ENCODE measurements at regions of chr1 and their contacts with region 1.

Region 1: GRCh38 chr1:40153073-40153770 is 8.0 kb upstream of the RLF start:
- DNase-seq: peak; percentile 59
- ATAC-seq: peak; percentile 85
- H3K4me3 ChIP-seq: peak overlapping the region; percentile 56; the same call in 1 of the 2 replicates
- H3K27ac ChIP-seq: peak overlapping the region; percentile 80
- H3K4me1 ChIP-seq: peaks cover 13% of the 10 kb centered on the region
- H3K27me3 ChIP-seq: no peaks in the 10 kb centered on the region
- CTCF ChIP-seq: peak; percentile 53 to 76 (median 71); a peak in 5 of 6 replicates
- EP300 ChIP-seq: no peak
- POLR2A ChIP-seq: no peak
- RAD21 ChIP-seq: peak; percentile 81

Region 2: DNA sequence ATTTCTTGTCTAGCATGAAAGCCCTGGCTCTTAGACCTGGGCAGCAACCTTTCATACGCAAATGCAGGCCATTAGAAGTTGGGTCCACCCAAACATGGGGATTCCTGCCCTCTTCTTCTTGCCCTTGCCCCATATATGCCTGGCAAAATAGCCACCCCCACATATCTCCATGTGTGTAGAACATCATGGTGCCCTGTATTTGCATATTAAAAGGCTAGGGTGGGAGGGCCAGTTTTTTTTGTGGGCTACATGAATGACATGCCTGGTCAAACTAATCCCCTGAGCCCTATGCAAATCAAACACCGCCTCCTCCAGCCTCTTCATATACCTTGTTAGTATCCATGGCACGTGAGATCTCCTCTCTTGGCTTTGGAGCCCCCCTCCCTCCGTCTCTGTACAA is 173.6 kb before region 1 on chr1:
- CTCF ChIA-PET with region 1: no interaction called
- POLR2A ChIA-PET with region 1: no interaction called
- RAD21 ChIA-PET with region 1: no interaction called
- SMC1A ChIA-PET with region 1: no interaction called
- in situ Hi-C with region 1: no loop called
- intact Hi-C with region 1: no loop called
- DNase-seq: no peak
- ATAC-seq: no peak
- H3K4me3 ChIP-seq: no peak overlapping the region
- H3K27ac ChIP-seq: no peak overlapping the region
- H3K4me1 ChIP-seq: peaks cover 3% of the 10 kb centered on the region
- H3K27me3 ChIP-seq: no peaks in the 10 kb centered on the region
- CTCF ChIP-seq: no peak
- EP300 ChIP-seq: no peak
- POLR2A ChIP-seq: no peak
- RAD21 ChIP-seq: no peak

Region 3: GRCh38 chr1:40078512-40079333 is 74.5 kb before region 1 on chr1:
- CTCF ChIA-PET with region 1: interaction called, 21 read pairs
- POLR2A ChIA-PET with region 1: interaction called, 5 read pairs
- RAD21 ChIA-PET with region 1: no interaction called
- SMC1A ChIA-PET with region 1: interaction called, 7 read pairs
- in situ Hi-C with region 1: no loop called
- intact Hi-C with region 1: no loop called
- DNase-seq: no peak
- ATAC-seq: peak; percentile 98
- H3K4me3 ChIP-seq: no peak overlapping the region
- H3K27ac ChIP-seq: no peak overlapping the region
- H3K4me1 ChIP-seq: no peaks in the 10 kb centered on the region
- H3K27me3 ChIP-seq: no peaks in the 10 kb centered on the region
- CTCF ChIP-seq: peak; percentile 74 to 85 (median 75)
- EP300 ChIP-seq: no peak
- POLR2A ChIP-seq: no peak
- RAD21 ChIP-seq: peak; percentile 63

Region 4: GRCh38 chr1:40185951-40186864 is 33.0 kb after region 1 on chr1:
- CTCF ChIA-PET with region 1: interaction called, 90 read pairs
- POLR2A ChIA-PET with region 1: interaction called, 7 read pairs
- RAD21 ChIA-PET with region 1: interaction called, 25 read pairs
- SMC1A ChIA-PET with region 1: interaction called, 62 read pairs
- in situ Hi-C with region 1: no loop called
- intact Hi-C with region 1: no loop called
- DNase-seq: peak; percentile 82
- ATAC-seq: peak; percentile 99
- H3K4me3 ChIP-seq: peak overlapping the region; percentile 60
- H3K27ac ChIP-seq: peak overlapping the region; percentile 71
- H3K4me1 ChIP-seq: peaks cover 32% of the 10 kb centered on the region
- H3K27me3 ChIP-seq: no peaks in the 10 kb centered on the region
- CTCF ChIP-seq: no peak
- EP300 ChIP-seq: peak; percentile 94
- POLR2A ChIP-seq: peak; percentile 57
- RAD21 ChIP-seq: no peak

Region 5: GRCh38 chr1:40232444-40232843 is 79.2 kb after region 1 on chr1:
- CTCF ChIA-PET with region 1: interaction called, 33 read pairs
- POLR2A ChIA-PET with region 1: interaction called, 5 read pairs
- RAD21 ChIA-PET with region 1: interaction called, 16 read pairs
- SMC1A ChIA-PET with region 1: interaction called, 31 read pairs
- in situ Hi-C with region 1: no loop called
- intact Hi-C with region 1: no loop called
- DNase-seq: peak; percentile 94
- ATAC-seq: peak; percentile 99
- H3K4me3 ChIP-seq: no peak overlapping the region
- H3K27ac ChIP-seq: peak overlapping the region; percentile 36
- H3K4me1 ChIP-seq: peaks cover 32% of the 10 kb centered on the region
- H3K27me3 ChIP-seq: no peaks in the 10 kb centered on the region
- CTCF ChIP-seq: no peak
- EP300 ChIP-seq: peak in 1 of 2 experiments; percentile 34; a peak in 1 of 4 replicates
- POLR2A ChIP-seq: no peak
- RAD21 ChIP-seq: no peak

Region 6: DNA sequence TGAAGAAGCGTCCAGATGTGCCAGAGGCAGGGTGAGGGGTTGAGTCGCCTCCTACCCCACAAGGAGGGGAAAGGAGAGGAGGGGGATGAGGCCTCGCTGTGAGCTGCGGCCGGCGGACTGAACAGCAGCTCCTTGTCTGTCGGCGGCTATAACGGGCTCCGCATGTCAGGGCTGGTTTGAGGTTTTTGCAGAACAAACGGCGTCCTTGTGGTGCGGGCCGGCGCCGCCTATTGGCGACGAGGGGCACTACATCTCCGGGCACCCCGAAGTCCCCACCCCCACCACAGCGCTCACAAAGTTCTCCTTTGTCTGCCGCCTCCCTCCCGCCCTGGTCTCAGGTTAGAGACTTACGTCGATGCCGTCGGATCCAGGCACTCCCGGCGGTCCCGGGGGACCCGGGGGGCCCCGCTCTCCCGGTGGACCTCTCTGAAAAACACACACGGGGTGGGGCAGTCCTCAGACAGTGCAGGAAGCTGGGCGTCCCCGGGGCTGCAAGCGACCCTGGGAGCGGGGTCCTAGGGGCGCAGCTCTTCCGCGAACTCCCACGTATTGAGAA is 162.1 kb after region 1 on chr1:
- CTCF ChIA-PET with region 1: interaction called, 125 read pairs
- POLR2A ChIA-PET with region 1: interaction called, 20 read pairs
- RAD21 ChIA-PET with region 1: interaction called, 81 read pairs
- SMC1A ChIA-PET with region 1: interaction called, 84 read pairs
- in situ Hi-C with region 1: no loop called
- intact Hi-C with region 1: loop called (anchors 2 kb)
- DNase-seq: peak; percentile 53
- ATAC-seq: peak; percentile 72
- H3K4me3 ChIP-seq: peak overlapping the region; percentile 70
- H3K27ac ChIP-seq: peak overlapping the region; percentile 59
- H3K4me1 ChIP-seq: peaks cover 41% of the 10 kb centered on the region
- H3K27me3 ChIP-seq: peaks cover 4 to 9% of the 10 kb centered on the region in 2 experiments; a peak in 3 of 4 replicates
- CTCF ChIP-seq: peak; percentile 96 to 98 (median 98)
- EP300 ChIP-seq: peak in 1 of 2 experiments; percentile 24; a peak in 1 of 4 replicates
- POLR2A ChIP-seq: peak; percentile 87
- RAD21 ChIP-seq: peak; percentile 69

Region 7: DNA sequence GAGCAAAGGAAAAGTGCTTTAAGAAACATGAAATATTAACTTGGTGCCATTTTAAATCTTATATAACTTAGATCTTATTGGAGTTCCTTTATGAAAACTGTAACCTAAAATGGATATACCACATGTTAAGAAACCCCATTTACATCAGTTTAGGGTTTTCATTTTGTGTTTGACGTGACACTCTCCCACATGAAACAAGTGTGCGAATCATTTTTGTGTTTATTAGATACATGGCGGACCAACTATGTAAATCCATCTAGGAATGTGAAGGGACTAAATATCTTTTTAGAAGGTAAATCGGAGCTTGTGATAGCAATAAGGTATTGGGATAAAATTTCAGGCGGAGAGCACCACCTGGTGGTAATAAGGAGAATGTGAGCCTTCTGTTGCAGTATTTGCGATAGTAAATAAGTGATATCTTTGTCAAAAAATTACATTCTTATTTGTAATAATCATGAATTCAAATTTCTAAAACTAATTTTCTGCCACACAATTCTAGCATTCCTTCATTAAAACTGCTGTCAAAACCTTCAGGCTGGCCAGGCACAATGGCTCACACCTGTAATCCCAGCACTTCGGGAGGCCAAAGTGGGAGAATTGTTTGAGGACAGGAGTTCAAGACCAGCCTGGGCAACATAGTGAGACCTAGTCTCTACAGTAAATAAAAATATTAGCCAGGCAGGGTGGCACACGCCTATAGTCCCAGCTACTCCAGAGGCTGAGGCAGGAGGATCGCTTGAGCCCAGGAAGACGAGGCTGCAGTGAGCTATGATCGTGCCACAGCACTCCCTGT is 251.6 kb after region 1 on chr1:
- CTCF ChIA-PET with region 1: interaction called, 48 read pairs
- POLR2A ChIA-PET with region 1: interaction called, 4 read pairs
- RAD21 ChIA-PET with region 1: interaction called, 34 read pairs
- SMC1A ChIA-PET with region 1: interaction called, 38 read pairs
- in situ Hi-C with region 1: loop called (anchors 5 kb)
- intact Hi-C with region 1: loop called (anchors 1 kb)
- DNase-seq: no peak
- ATAC-seq: peak; percentile 21
- H3K4me3 ChIP-seq: 0 out of 2 replicates have a peak overlapping the region, but pooled peaks have one; percentile 2
- H3K27ac ChIP-seq: peak overlapping the region; percentile 68
- H3K4me1 ChIP-seq: peaks cover 45% of the 10 kb centered on the region
- H3K27me3 ChIP-seq: no peaks in the 10 kb centered on the region
- CTCF ChIP-seq: peak; percentile 65 to 74 (median 72)
- EP300 ChIP-seq: no peak
- POLR2A ChIP-seq: no peak
- RAD21 ChIP-seq: peak; percentile 82

Region 8: GRCh38 chr1:40575336-40575735 is 422.1 kb after region 1 on chr1:
- CTCF ChIA-PET with region 1: no interaction called
- POLR2A ChIA-PET with region 1: no interaction called
- RAD21 ChIA-PET with region 1: no interaction called
- SMC1A ChIA-PET with region 1: no interaction called
- in situ Hi-C with region 1: no loop called
- intact Hi-C with region 1: no loop called
- DNase-seq: no peak
- ATAC-seq: no peak
- H3K4me3 ChIP-seq: no peak overlapping the region
- H3K27ac ChIP-seq: no peak overlapping the region
- H3K4me1 ChIP-seq: no peaks in the 10 kb centered on the region
- H3K27me3 ChIP-seq: no peaks in the 10 kb centered on the region
- CTCF ChIP-seq: no peak
- EP300 ChIP-seq: no peak
- POLR2A ChIP-seq: no peak
- RAD21 ChIP-seq: no peak